ENCODE measurements at regions of chr1 and their contacts with region 1.

Region 1: DNA sequence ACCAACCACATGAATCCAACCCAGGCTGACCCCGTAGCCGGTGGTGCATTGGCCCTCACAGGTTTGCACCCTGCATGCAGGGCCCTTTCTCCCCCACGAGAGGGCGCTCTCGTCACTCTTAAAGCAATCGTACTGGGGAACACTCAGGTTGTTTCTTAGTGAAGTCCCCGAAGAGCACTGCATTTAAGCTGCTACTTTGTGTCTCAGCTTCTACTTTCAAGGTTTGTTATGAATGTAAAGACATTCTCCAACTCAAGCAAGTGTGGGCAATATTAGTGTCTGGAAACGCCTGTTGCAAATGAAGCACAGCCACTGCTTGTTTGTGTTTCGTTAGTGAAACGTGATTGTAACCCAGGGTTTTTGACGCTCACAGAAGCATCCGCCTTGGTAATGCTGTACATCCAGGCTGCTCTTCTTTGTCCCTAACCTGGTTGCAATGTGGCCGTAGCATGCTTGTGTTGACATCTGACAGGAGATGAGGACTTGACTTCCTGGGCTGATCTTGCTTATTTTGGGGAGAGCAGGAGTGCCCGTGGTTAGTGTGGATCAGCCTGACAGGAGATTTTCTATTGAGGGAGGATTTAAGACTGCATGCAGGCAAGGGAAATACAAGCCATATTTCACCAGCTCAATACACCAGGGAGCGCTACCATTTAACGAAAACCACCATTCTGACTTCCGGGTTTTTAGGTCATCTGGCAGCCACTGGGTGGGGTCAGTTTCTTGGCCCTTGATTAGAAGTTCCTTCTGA is 79.8 kb downstream of the ST6GALNAC3 start:
- DNase-seq: peak; percentile 81
- H3K4me3 Mint-ChIP-seq: peak overlapping the region; percentile 71
- H3K27ac Mint-ChIP-seq: no peak overlapping the region
- H3K4me1 Mint-ChIP-seq: peaks cover 7% of the 10 kb centered on the region
- H3K27me3 Mint-ChIP-seq: no peaks in the 10 kb centered on the region
- CTCF ChIP-seq: peak; percentile 93

Region 2: GRCh38 chr1:75632350-75632949 is 521.9 kb before region 1 on chr1:
- CTCF ChIA-PET with region 1: no interaction called
- POLR2A ChIA-PET with region 1: no interaction called
- intact Hi-C with region 1: no loop called
- DNase-seq: peak; percentile 58
- H3K4me3 Mint-ChIP-seq: no peak overlapping the region
- H3K27ac Mint-ChIP-seq: no peak overlapping the region
- H3K4me1 Mint-ChIP-seq: no peaks in the 10 kb centered on the region
- H3K27me3 Mint-ChIP-seq: peaks cover 20% of the 10 kb centered on the region
- CTCF ChIP-seq: peak; percentile 78

Region 3: DNA sequence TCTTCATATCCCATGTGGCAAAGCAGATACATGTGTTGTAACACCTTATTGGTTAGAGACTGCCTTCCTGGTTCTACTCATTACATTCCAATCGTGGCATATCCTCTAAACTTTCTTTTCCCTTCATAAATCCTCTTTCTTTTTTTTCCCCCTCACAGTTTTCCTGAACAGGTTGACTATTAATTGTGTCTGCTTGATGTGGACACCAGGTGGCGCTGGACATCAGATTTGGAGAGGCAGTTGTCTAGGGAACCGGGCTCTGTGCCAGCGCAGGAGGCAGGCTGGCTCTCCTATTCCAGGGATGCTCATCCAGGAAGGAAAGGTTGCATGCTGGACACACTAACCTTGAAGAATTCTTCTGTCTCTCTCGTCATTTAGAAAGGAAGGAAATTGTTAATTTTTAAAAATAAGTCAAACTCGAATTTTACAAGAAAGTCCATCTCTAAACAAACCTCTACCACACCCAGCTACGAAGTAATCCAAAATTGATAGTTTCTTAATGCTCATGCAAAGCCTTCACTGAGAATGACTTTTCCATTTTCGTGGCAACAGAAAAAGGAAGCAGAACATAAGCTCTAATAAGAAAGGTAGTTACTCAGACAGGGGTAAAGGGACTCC is 162.8 kb before region 1 on chr1:
- CTCF ChIA-PET with region 1: interaction called, 7 read pairs
- POLR2A ChIA-PET with region 1: no interaction called
- intact Hi-C with region 1: loop called (anchors 1 kb)
- DNase-seq: peak; percentile 92
- H3K4me3 Mint-ChIP-seq: no peak overlapping the region
- H3K27ac Mint-ChIP-seq: no peak overlapping the region
- H3K4me1 Mint-ChIP-seq: no peaks in the 10 kb centered on the region
- H3K27me3 Mint-ChIP-seq: no peaks in the 10 kb centered on the region
- CTCF ChIP-seq: peak; percentile 86

Region 4: DNA sequence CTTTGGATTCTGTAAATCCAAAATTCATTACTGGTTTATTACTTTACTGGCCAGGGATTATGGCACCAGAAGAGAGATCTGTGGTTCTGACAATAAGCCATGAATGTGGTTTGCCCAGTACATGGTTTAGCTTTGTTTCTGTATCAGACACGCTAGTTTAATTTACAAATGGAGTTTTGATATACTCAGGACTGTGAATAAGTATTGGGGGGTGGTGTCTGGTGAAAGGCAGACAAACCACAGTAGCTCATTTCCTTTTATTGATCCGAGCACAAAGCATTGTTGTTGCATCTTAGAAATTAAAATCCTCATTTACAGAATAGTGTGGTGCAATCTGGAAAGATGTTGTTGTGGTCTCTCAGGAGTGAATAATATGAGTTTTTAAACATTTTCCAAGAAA is 16.1 kb after region 1 on chr1:
- CTCF ChIA-PET with region 1: interaction called, 25 read pairs
- POLR2A ChIA-PET with region 1: no interaction called
- intact Hi-C with region 1: no loop called
- DNase-seq: no peak
- H3K4me3 Mint-ChIP-seq: no peak overlapping the region
- H3K27ac Mint-ChIP-seq: no peak overlapping the region
- H3K4me1 Mint-ChIP-seq: no peaks in the 10 kb centered on the region
- H3K27me3 Mint-ChIP-seq: peaks cover 44% of the 10 kb centered on the region
- CTCF ChIP-seq: no peak

Region 5: DNA sequence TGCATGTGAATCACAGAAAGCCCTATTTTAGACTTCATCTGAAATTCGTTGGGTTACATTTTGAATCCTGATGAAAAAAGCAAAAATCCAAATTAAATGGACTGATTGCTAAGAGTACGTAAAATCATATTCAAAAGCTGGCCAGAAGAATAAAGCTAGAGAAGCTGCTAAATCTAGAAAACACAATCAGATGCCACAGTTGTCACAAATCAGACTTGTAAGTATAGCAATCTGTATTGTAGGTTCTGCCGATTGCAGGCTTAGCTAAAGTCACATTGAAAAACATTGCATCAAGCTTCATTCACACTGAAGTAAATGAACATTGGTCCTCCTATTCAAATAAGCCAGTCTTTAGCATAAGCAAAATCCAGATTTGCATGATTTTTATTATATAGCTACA is 477.8 kb after region 1 on chr1:
- CTCF ChIA-PET with region 1: no interaction called
- POLR2A ChIA-PET with region 1: no interaction called
- intact Hi-C with region 1: no loop called
- DNase-seq: no peak
- H3K4me3 Mint-ChIP-seq: no peak overlapping the region
- H3K27ac Mint-ChIP-seq: no peak overlapping the region
- H3K4me1 Mint-ChIP-seq: peaks cover 15% of the 10 kb centered on the region
- H3K27me3 Mint-ChIP-seq: no peaks in the 10 kb centered on the region
- CTCF ChIP-seq: no peak

Region 6: GRCh38 chr1:76901158-76901767 is 746.9 kb after region 1 on chr1:
- CTCF ChIA-PET with region 1: no interaction called
- POLR2A ChIA-PET with region 1: no interaction called
- intact Hi-C with region 1: loop called (anchors 2 kb)
- DNase-seq: peak; percentile 69
- H3K4me3 Mint-ChIP-seq: no peak overlapping the region
- H3K27ac Mint-ChIP-seq: no peak overlapping the region
- H3K4me1 Mint-ChIP-seq: no peaks in the 10 kb centered on the region
- H3K27me3 Mint-ChIP-seq: no peaks in the 10 kb centered on the region
- CTCF ChIP-seq: peak; percentile 53

Region 7: GRCh38 chr1:77126307-77126706 is 971.9 kb after region 1 on chr1:
- CTCF ChIA-PET with region 1: interaction called, 17 read pairs
- POLR2A ChIA-PET with region 1: interaction called, 3 read pairs
- intact Hi-C with region 1: loop called (anchors 1 kb)
- DNase-seq: peak; percentile 68
- H3K4me3 Mint-ChIP-seq: no peak overlapping the region
- H3K27ac Mint-ChIP-seq: no peak overlapping the region
- H3K4me1 Mint-ChIP-seq: peaks cover 10% of the 10 kb centered on the region
- H3K27me3 Mint-ChIP-seq: no peaks in the 10 kb centered on the region
- CTCF ChIP-seq: peak; percentile 79

Region 8: GRCh38 chr1:77533660-77534305 is 1379.4 kb after region 1 on chr1:
- CTCF ChIA-PET with region 1: interaction called, 3 read pairs
- POLR2A ChIA-PET with region 1: interaction called, 3 read pairs
- intact Hi-C with region 1: loop called (anchors 10 kb)
- DNase-seq: peak; percentile 71
- H3K4me3 Mint-ChIP-seq: no peak overlapping the region
- H3K27ac Mint-ChIP-seq: no peak overlapping the region
- H3K4me1 Mint-ChIP-seq: peaks cover 14% of the 10 kb centered on the region
- H3K27me3 Mint-ChIP-seq: no peaks in the 10 kb centered on the region
- CTCF ChIP-seq: peak; percentile 84

Measured in MCF 10A (cell line).